AG04449 (cell line): ENCODE measurements at regions of chr22 and their contacts with region 1.

Region 1: GRCh38 chr22:17742527-17742902 is 31.8 kb downstream of the BID start:
- DNase-seq: no peak
- H3K4me3 ChIP-seq: no peak overlapping the region
- CTCF ChIP-seq: peak; percentile 93

Region 2: DNA sequence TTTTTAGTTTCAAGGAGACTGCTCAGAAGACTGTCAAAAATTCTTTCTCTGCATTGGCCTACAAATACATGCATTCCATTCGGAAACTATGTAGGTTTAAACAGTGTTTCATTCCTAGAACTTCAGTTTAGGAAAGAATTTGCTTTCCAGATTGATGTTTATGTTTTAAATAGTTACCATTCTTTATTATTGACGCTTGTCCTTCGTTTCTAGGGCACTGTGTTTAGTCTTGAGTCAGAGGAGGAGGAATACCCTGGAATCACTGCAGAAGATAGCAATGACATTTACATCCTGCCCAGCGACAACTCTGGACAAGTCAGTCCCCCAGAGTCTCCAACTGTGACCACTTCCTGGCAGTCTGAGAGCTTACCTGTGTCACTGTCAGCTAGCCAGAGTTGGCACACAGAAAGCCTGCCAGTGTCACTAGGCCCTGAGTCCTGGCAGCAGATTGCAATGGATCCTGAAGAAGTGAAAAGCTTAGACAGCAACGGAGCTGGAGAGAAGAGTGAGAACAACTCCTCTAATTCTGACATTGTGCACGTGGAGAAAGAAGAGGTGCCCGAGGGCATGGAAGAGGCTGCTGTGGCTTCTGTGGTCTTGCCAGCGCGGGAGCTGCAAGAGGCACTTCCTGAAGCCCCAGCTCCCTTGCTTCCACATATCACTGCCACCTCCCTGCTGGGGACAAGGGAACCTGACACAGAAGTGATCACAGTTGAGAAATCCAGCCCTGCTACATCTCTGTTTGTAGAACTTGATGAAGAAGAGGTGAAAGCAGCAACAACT is 15.9 kb before region 1 on chr22:
- CTCF ChIA-PET with region 1: interaction called, 91 read pairs
- POLR2A ChIA-PET with region 1: no interaction called
- DNase-seq: peak; percentile 61
- H3K4me3 ChIP-seq: peak overlapping the region; percentile 15; the same call in 1 of the 2 replicates
- CTCF ChIP-seq: no peak

Region 3: GRCh38 chr22:17761138-17761488 is 18.6 kb after region 1 on chr22:
- CTCF ChIA-PET with region 1: interaction called, 49 read pairs
- POLR2A ChIA-PET with region 1: no interaction called
- DNase-seq: no peak
- H3K4me3 ChIP-seq: no peak overlapping the region
- CTCF ChIP-seq: no peak

Region 4: GRCh38 chr22:17772958-17773605 is 30.6 kb after region 1 on chr22:
- CTCF ChIA-PET with region 1: interaction called, 37 read pairs
- POLR2A ChIA-PET with region 1: no interaction called
- DNase-seq: no peak
- H3K4me3 ChIP-seq: peak overlapping the region; percentile 64
- CTCF ChIP-seq: no peak

Region 5: GRCh38 chr22:17830043-17830961 is 87.8 kb after region 1 on chr22:
- CTCF ChIA-PET with region 1: interaction called, 17 read pairs
- POLR2A ChIA-PET with region 1: no interaction called
- DNase-seq: peak; percentile 19
- H3K4me3 ChIP-seq: no peak overlapping the region
- CTCF ChIP-seq: peak; percentile 99

Region 6: GRCh38 chr22:17860220-17860965 is 117.9 kb after region 1 on chr22:
- CTCF ChIA-PET with region 1: no interaction called
- POLR2A ChIA-PET with region 1: no interaction called
- DNase-seq: no peak
- H3K4me3 ChIP-seq: no peak overlapping the region
- CTCF ChIP-seq: no peak